GM12878 (cell line): ENCODE measurements at regions of chr7 and their contacts with region 1.

Region 1: DNA sequence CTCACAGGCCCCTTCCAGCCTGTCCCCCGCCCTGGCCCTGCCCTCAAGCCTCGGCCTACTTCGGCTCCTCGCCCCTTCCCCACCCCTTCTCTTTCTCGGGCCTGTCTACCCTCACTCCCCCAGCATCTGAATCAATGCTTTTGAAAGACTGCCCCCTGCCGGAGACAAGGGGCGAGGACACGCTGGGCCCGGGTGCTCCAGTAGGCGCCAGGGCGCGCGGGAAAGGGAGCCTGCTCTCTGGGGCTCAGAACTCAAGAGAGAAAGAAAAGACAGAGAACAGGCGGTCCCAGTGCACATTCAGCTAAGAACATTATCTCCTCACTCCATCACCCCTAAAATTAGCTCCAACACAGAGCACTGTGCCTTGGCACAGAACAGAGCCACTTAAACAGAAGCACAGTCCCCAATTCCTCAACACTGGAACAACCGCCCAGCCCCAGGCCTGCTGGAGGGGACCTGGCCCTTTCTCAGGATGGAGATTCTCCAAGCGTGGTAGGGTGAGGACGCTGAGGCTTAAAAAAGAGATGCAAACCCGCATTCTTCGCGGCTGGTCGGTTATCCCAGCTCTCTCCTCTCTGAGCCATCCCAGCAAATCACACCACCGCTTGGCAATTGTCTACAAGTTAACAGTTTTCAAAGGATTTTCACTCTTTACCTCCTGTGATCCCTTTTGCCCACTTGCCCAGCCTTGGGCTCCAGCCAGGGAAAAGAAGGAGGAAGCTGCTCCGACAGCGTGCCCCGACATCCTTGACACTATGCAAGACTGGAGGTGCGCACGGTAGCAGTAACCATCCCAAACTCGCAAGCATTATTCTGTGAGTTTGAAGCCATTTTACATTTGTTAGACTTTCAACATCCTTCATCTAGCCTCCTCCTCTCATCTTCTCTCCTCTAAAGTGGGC is 2.1 kb downstream of the GIGYF1 start:
- DNase-seq: no peak
- ATAC-seq: peak; percentile 87
- H3K4me3 ChIP-seq: peak overlapping the region; percentile 95
- H3K27ac ChIP-seq: peak overlapping the region; percentile 74; the same call in 1 of the 2 replicates
- H3K4me1 ChIP-seq: peaks cover 41% of the 10 kb centered on the region
- H3K27me3 ChIP-seq: no peaks in the 10 kb centered on the region
- CTCF ChIP-seq: peak; percentile 85 to 90 (median 88)
- EP300 ChIP-seq: no peak
- POLR2A ChIP-seq: no peak
- RAD21 ChIP-seq: peak; percentile 83

Region 2: DNA sequence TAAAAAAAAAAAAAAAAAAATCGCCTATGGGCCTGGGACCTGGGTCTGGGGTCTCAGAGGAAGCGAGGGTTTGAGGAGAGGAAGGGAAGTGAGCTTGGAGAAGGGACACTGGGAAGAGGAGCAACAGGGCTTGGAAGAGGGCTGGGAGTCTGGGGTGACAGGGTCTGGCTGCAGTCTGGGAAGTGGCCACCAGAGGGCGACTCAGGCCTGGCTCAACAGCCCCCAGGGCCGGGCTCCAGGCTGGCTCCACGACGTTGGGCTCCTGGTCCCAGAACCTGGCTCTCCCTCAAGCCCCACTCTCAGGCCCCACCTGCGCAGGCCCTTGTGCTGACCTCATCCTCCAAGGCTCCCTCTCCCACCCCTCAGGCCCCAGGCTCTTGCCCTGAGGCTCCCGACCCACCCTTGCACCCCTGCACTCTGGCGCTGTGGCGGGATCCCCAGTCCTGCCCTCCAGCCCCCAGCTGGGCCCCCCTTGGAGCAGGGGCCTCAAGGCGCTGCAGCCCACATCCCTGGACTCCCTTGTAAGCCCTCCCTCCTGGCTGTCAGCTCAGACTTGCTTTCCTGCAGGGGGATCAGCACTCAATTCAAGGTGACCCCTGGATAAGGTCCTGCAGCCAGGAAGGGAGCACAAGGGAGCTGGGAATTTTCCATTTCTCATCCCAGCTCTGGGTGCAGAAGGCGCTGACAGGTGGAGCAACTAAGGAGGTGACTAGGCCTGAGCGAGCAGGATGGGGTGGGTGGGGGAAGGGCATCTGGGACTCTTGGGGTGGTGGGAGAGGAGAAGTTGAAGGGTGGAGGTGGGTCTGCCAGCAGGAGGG is 222.5 kb before region 1 on chr7:
- CTCF ChIA-PET with region 1: interaction called, 6 read pairs
- POLR2A ChIA-PET with region 1: no interaction called
- RAD21 ChIA-PET with region 1: no interaction called
- SMC1A ChIA-PET with region 1: interaction called, 3 read pairs
- in situ Hi-C with region 1: loop called (anchors 25 kb)
- intact Hi-C with region 1: loop called (anchors 10 kb)
- DNase-seq: no peak
- ATAC-seq: peak; percentile 94
- H3K4me3 ChIP-seq: no peak overlapping the region
- H3K27ac ChIP-seq: no peak overlapping the region
- H3K4me1 ChIP-seq: peaks cover 12% of the 10 kb centered on the region
- H3K27me3 ChIP-seq: no peaks in the 10 kb centered on the region
- CTCF ChIP-seq: peak; percentile 95 to 96 (median 96)
- EP300 ChIP-seq: no peak
- POLR2A ChIP-seq: peak; percentile 63; the same call in 1 of the 2 replicates
- RAD21 ChIP-seq: peak; percentile 85

Region 3: GRCh38 chr7:100563809-100564400 is 128.0 kb before region 1 on chr7:
- CTCF ChIA-PET with region 1: interaction called, 47 read pairs
- POLR2A ChIA-PET with region 1: interaction called, 5 read pairs
- RAD21 ChIA-PET with region 1: interaction called, 22 read pairs
- SMC1A ChIA-PET with region 1: interaction called, 6 read pairs
- in situ Hi-C with region 1: no loop called
- intact Hi-C with region 1: loop called (anchors 5 kb)
- DNase-seq: no peak
- ATAC-seq: peak; percentile 84
- H3K4me3 ChIP-seq: no peak overlapping the region
- H3K27ac ChIP-seq: no peak overlapping the region
- H3K4me1 ChIP-seq: peaks cover 8% of the 10 kb centered on the region
- H3K27me3 ChIP-seq: no peaks in the 10 kb centered on the region
- CTCF ChIP-seq: peak; percentile 94 to 98 (median 97)
- EP300 ChIP-seq: no peak
- POLR2A ChIP-seq: peak; percentile 35
- RAD21 ChIP-seq: peak; percentile 71

Region 4: GRCh38 chr7:100611974-100612729 is 79.8 kb before region 1 on chr7 and contains the start of gene MOSPD3:
- CTCF ChIA-PET with region 1: interaction called, 33 read pairs
- POLR2A ChIA-PET with region 1: interaction called, 5 read pairs
- RAD21 ChIA-PET with region 1: interaction called, 7 read pairs
- SMC1A ChIA-PET with region 1: interaction called, 4 read pairs
- in situ Hi-C with region 1: no loop called
- intact Hi-C with region 1: loop called (anchors 5 kb)
- DNase-seq: peak; percentile 99
- ATAC-seq: peak; percentile 98
- H3K4me3 ChIP-seq: peak within 1 kb of the TSS; percentile 75
- H3K27ac ChIP-seq: peak within 1 kb of the TSS; percentile 97
- H3K4me1 ChIP-seq: peaks cover 5% of the 10 kb centered on the region
- H3K27me3 ChIP-seq: peaks cover 0 to 3% of the 10 kb centered on the region in 2 experiments; a peak in 2 of 4 replicates
- CTCF ChIP-seq: no peak
- EP300 ChIP-seq: no peak
- POLR2A ChIP-seq: peak; percentile 90
- RAD21 ChIP-seq: no peak
- polyA plus RNA-seq, gene MOSPD3: 0.61 to 1.2 TPM

Region 5: GRCh38 chr7:100667709-100668449 is 24.0 kb before region 1 on chr7:
- CTCF ChIA-PET with region 1: interaction called, 10 read pairs
- POLR2A ChIA-PET with region 1: no interaction called
- RAD21 ChIA-PET with region 1: no interaction called
- SMC1A ChIA-PET with region 1: no interaction called
- in situ Hi-C with region 1: no loop called
- intact Hi-C with region 1: no loop called
- DNase-seq: no peak
- ATAC-seq: no peak
- H3K4me3 ChIP-seq: no peak overlapping the region
- H3K27ac ChIP-seq: no peak overlapping the region
- H3K4me1 ChIP-seq: no peaks in the 10 kb centered on the region; the same call in 1 of the 2 replicates
- H3K27me3 ChIP-seq: no peaks in the 10 kb centered on the region
- CTCF ChIP-seq: no peak
- EP300 ChIP-seq: no peak
- POLR2A ChIP-seq: no peak
- RAD21 ChIP-seq: no peak

Region 6: DNA sequence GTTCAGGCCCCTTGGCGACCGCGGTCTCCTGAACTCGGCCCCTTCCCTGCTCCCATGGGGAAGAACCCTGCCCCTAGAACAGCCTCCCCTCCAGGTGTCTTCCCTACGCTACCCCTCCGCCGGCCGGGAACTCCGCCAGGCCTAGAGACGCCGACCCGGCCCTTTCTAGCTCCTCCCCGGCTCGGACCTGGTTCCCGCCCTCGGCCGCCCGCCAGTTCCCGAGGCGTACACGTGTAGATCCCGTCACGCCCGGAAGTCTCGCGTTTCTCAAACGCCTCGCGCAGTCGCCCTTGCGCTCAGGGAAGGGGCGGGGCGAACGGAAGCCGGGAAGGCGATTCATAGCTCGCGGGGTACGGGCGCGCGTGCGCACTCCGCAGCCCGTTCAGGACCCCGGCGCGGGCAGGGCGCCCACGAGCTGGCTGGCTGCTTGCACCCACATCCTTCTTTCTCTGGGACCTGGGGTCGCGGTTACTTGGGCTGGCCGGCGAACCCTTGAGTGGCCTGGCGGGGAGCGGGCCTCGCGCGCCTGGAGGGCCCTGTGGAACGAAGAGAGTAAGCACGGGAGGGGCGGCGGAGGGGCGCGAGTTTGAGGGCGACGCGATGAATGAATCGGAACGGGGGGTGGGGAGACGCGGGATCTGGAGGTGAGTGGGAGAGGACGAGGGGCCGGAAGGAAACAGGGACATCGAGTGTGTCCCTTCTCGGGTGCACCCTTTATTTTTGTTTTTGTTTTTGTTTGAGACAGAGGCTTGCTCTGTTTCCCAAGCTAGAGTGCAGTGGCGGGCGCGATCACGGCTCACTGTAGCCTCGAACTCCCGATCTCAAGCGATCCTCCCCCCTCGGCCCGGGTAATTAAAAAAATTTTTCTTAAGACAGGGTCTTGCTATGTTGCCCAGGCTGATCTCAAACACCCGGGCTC is 14.1 kb after region 1 on chr7 and contains the start of gene POP7:
- CTCF ChIA-PET with region 1: interaction called, 134 read pairs
- POLR2A ChIA-PET with region 1: interaction called, 29 read pairs
- RAD21 ChIA-PET with region 1: interaction called, 56 read pairs
- SMC1A ChIA-PET with region 1: interaction called, 28 read pairs
- in situ Hi-C with region 1: no loop called
- intact Hi-C with region 1: no loop called
- DNase-seq: peak; percentile 90
- ATAC-seq: peak; percentile 98
- H3K4me3 ChIP-seq: peak within 1 kb of the TSS; percentile 97
- H3K27ac ChIP-seq: peak within 1 kb of the TSS; percentile 93
- H3K4me1 ChIP-seq: peaks cover 13% of the 10 kb centered on the region
- H3K27me3 ChIP-seq: no peaks in the 10 kb centered on the region
- CTCF ChIP-seq: no peak
- EP300 ChIP-seq: no peak
- POLR2A ChIP-seq: peak; percentile 89
- RAD21 ChIP-seq: no peak
- polyA plus RNA-seq, gene POP7: 12.1 to 37.9 TPM